AG04450 (cell line): ENCODE measurements at regions of chr14 and their contacts with region 1.

Region 1: GRCh38 chr14:34300882-34301734 is 160.9 kb downstream of the SPTSSA start:
- DNase-seq: no peak
- H3K4me3 ChIP-seq: no peak overlapping the region
- H3K27ac ChIP-seq: no peak overlapping the region
- H3K27me3 ChIP-seq: no peaks in the 10 kb centered on the region
- CTCF ChIP-seq: peak; percentile 50

Region 2: DNA sequence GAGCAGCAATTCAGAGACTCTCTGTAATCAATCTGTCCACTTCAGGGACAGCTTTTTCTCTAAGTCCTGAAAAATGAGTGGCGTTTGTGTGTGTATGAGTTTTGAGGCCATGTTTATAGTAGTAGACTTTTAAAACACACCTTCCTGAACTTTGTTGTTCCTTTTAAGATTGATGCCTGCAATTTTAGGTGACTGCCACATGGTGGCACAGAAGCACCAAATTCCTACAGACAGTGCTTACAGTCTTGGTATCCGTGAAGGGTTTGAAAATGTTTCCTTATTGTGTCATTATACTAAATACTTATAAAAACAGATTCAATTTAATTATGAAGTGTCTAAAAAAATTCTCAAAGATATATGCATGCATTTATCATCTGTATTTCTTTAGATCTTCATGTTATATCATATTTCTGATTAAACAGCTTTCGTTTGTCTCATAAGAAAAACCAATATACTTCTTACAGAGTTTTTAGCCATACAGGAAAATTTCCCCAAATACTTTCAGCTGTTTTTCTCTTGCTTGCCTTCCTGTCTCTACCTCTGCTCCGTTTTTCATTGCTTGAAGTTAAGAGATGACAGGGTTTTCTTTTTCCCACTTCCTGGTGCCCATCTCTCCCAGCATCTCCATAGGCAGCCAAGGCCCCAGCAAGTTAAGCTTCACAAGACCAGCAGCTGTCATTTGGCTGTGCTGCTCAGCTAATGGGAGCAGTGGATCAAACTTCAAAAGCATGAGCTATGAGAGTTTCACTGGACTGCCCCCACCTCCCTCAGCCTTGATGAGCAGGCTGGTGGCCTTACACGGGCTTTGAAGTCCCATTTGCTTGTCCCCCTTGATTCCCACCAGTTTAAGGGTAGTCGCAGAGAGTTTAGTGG is 1712.4 kb before region 1 on chr14:
- CTCF ChIA-PET with region 1: interaction called, 10 read pairs
- POLR2A ChIA-PET with region 1: no interaction called
- DNase-seq: no peak
- H3K4me3 ChIP-seq: no peak overlapping the region
- H3K27ac ChIP-seq: no peak overlapping the region
- H3K27me3 ChIP-seq: peaks cover 3% of the 10 kb centered on the region
- CTCF ChIP-seq: peak; percentile 90

Region 3: GRCh38 chr14:34169561-34169960 is 131.5 kb before region 1 on chr14:
- CTCF ChIA-PET with region 1: no interaction called
- POLR2A ChIA-PET with region 1: no interaction called
- DNase-seq: no peak
- H3K4me3 ChIP-seq: no peak overlapping the region
- H3K27ac ChIP-seq: no peak overlapping the region
- H3K27me3 ChIP-seq: no peaks in the 10 kb centered on the region
- CTCF ChIP-seq: no peak

Region 4: GRCh38 chr14:34180460-34180868 is 120.6 kb before region 1 on chr14:
- CTCF ChIA-PET with region 1: no interaction called
- POLR2A ChIA-PET with region 1: no interaction called
- DNase-seq: no peak
- H3K4me3 ChIP-seq: no peak overlapping the region
- H3K27ac ChIP-seq: no peak overlapping the region
- H3K27me3 ChIP-seq: peaks cover under 1% of the 10 kb centered on the region
- CTCF ChIP-seq: no peak